BJ (cell line): ENCODE measurements at regions of chr19 and their contacts with region 1.

Region 1: GRCh38 chr19:36132489-36132891 is 7.4 kb upstream of the CAPNS1 start:
- DNase-seq: no peak
- H3K4me3 ChIP-seq: no peak overlapping the region
- H3K27me3 ChIP-seq: no peaks in the 10 kb centered on the region
- CTCF ChIP-seq: no peak

Region 2: GRCh38 chr19:35790981-35791813 is 341.3 kb before region 1 on chr19:
- CTCF ChIA-PET with region 1: no interaction called
- POLR2A ChIA-PET with region 1: no interaction called
- DNase-seq: no peak
- H3K4me3 ChIP-seq: no peak overlapping the region
- H3K27me3 ChIP-seq: no peaks in the 10 kb centered on the region; the same call in 1 of the 2 replicates
- CTCF ChIP-seq: peak; percentile 14; the same call in 1 of the 2 replicates

Region 3: DNA sequence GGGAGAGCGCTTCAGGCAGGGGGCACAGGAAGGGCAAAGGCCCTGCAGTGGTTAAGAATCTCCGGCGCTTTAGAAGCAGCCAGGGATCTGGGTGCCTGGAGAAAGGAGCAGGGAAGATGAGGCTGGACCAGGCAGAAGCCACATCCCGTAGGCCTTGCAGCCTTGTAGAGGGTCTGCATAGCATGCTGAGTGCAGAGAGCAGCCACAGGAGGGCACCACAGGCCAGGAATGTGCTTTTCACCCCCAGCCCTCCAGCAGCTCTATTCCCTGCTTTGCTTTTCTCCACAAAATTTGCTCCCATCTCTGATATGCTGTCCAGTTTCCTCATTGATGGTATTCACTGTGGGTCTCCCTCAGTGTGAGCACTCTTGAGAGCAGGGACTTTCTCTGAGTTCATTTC is 72.1 kb before region 1 on chr19:
- CTCF ChIA-PET with region 1: interaction called, 10 read pairs
- POLR2A ChIA-PET with region 1: no interaction called
- DNase-seq: no peak
- H3K4me3 ChIP-seq: no peak overlapping the region
- H3K27me3 ChIP-seq: no peaks in the 10 kb centered on the region
- CTCF ChIP-seq: peak; percentile 82

Region 4: DNA sequence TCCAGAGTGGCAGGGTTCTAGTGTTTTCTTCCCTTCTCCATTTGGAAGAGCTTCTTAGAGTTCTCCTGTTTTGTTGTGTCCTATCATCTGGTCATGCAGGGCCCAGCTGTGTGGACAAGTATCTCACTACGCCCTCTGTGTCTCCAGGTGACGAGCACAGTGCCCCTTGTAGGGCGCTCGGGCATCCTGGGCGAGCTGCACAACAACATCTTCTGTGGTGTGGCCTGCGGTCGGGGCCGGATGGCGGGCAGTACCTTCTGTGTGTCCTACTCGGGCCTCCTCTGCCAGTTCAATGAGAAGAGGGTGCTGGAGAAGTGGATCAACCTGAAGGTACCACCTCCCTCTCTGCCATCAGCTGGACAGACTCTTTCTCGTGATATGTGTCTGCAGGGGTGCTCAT is 64.8 kb before region 1 on chr19:
- CTCF ChIA-PET with region 1: interaction called, 10 read pairs
- POLR2A ChIA-PET with region 1: no interaction called
- DNase-seq: no peak
- H3K4me3 ChIP-seq: no peak overlapping the region
- H3K27me3 ChIP-seq: no peaks in the 10 kb centered on the region
- CTCF ChIP-seq: no peak

Region 5: DNA sequence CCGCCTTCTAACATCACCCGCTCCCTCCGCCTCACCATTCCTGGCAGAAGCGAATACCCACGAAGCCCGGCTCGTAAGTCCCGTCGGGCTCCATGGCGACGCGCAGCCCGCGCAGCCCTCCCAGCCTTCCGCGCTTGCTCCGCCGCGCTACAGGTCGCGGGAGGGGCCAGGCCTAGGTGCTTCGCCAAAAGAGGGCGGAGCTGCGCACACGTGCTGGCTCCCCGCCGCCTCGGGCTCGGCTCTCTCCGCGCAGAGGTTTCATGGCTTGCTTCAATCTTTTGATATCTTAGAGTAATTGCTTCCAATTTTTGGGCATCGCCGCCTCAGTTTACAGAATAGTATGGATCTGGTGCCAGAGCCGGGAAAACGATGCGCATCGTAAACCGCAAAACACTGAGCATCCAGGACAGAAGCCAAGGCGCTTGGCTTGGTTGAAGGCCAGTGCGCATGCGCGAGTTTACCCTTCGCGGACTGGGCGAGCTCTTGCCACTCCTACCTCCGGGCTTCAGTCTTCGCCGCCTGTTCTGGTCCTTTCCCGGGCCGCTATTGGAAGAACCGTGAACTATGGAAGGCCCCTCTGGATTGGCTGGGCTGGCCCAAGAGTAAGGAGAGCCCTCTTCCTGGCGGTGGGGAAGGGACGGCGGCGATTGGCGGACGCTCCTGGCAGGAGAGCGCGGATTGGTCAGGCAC is 17.6 kb before region 1 on chr19 and contains the start of gene POLR2I:
- CTCF ChIA-PET with region 1: interaction called, 24 read pairs
- POLR2A ChIA-PET with region 1: interaction called, 3 read pairs
- DNase-seq: peak; percentile 99
- H3K4me3 ChIP-seq: peak within 1 kb of the TSS; percentile 98
- H3K27me3 ChIP-seq: no peaks in the 10 kb centered on the region
- CTCF ChIP-seq: no peak
- polyA plus RNA-seq, gene POLR2I: 67.1 and 94.0 TPM in 2 replicates

Region 6: DNA sequence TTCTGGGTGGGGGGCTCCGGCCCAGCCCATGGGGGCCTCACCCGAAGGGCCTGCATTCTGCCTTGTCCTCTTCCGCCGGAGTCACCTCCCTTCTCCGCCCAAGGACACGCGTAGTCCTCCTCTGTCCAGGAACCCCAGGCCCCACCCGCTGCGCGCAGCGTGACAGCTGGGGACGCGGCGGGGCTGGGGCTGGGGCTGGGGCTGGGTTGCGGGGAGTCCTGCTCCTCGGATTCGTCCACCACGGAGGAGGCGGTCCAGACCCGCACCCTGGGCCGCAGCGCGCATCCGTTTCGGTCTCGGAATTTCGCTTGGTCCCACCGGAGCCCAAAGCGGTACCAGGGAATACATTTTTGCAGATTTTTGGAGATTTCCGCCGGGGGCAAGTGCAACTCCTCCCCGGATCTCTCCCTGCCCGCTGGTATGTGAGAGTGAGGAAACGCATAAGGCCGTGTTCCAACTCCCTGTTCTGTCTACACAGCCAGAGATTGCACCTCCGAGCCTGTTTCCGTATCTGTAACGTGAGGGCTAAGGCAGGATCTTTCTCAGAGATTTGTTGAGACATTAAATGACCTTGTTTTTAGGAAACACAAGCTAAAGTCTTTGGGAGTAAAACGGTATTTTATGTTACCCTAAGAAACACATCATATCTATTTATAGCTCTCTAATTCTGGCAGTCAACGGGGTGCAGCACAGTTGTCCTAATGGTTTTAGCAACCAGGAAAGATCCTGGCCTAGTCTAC is 20.0 kb after region 1 on chr19 and contains the start of gene COX7A1:
- CTCF ChIA-PET with region 1: interaction called, 16 read pairs
- POLR2A ChIA-PET with region 1: interaction called, 3 read pairs
- DNase-seq: no peak
- H3K4me3 ChIP-seq: peak within 1 kb of the TSS; percentile 46
- H3K27me3 ChIP-seq: no peaks in the 10 kb centered on the region
- CTCF ChIP-seq: no peak
- polyA plus RNA-seq, gene COX7A1: 193 and 569 TPM in 2 replicates

Region 7: GRCh38 chr19:36160821-36161596 is 28.5 kb after region 1 on chr19:
- CTCF ChIA-PET with region 1: interaction called, 12 read pairs
- POLR2A ChIA-PET with region 1: interaction called, 14 read pairs
- DNase-seq: no peak
- H3K4me3 ChIP-seq: no peak overlapping the region
- H3K27me3 ChIP-seq: no peaks in the 10 kb centered on the region
- CTCF ChIP-seq: no peak

Region 8: DNA sequence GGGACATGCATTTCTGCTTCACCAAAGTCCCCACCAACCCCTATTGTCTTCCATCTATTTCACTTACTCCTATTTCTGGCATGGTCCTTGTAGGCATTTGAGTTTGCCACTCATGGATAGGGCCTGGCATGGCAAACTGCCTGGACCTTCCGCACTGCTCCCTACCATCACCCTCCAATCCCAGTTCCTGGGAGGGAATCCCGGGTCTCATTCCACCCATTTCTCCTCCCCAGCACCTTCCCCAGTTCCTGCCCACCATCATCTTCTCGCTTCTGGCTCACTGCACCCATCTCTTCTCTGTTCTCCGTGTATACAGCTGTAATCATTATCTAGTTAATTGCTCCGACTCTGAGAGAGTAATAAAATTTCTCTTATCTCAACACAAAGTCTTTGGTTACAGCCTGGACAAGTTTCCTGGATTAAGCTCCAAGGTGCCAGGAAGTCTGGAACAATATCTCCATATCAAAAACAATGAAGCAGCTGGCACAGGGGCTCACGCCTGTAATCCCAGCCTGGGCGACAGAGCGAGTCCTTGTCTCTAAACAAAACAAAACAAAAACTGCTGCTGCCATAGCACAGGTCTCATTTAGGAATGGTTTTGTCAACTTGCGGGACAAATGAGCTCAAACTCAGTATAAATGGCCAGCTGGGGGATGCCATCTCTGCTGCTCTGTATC is 36.7 kb after region 1 on chr19:
- CTCF ChIA-PET with region 1: interaction called, 61 read pairs
- POLR2A ChIA-PET with region 1: no interaction called
- DNase-seq: no peak
- H3K4me3 ChIP-seq: no peak overlapping the region
- H3K27me3 ChIP-seq: no peaks in the 10 kb centered on the region
- CTCF ChIP-seq: no peak